B cell (primary cell): ENCODE measurements at regions of chr15 and their contacts with region 1.

Region 1: DNA sequence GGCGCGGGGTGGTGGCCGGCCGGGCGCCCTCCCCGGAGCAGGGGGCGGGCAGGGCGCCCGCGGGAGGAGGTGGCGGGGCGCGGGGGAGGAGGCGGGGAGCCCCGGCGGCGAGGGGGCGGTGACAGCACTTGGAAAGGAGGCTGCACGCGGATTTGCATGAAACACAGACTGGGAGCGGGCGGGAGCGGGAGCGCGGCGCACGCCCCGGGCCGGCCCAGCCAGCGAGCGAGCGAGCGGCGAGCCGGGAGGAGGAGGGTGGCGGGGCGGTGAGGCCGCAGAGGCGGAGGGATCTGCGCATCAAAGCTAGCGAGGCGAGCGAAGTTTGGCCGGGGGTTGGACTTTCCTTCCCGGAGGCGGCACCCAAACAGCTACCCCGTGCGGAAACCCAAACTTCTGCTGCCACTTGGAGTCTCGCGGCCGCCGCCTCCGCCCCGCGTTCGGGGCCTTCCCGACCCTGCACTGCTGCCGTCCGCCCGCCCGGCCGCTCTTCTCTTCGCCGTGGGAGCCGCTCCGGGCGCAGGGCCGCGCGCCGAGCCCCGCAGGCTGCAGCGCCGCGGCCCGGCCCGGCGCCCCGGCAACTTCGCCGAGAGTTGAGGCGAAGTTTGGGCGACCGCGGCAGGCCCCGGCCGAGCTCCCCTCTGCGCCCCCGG is at the start of gene SMAD3:
- DNase-seq: peak; percentile 93
- ATAC-seq: peak; percentile 74
- H3K4me3 ChIP-seq: peak within 1 kb of the TSS; percentile 42 to 99 (median 98)
- H3K4me3 Mint-ChIP-seq: peak within 1 kb of the TSS; percentile 96
- H3K27ac ChIP-seq: peak within 1 kb of the TSS; percentile 58 to 79
- H3K27ac Mint-ChIP-seq: peak within 1 kb of the TSS; percentile 92
- H3K4me1 ChIP-seq: peaks cover 33 to 51% of the 10 kb centered on the region in 2 donors
- H3K4me1 Mint-ChIP-seq: peaks cover 47% of the 10 kb centered on the region
- H3K27me3 ChIP-seq: no peaks in the 10 kb centered on the region
- H3K27me3 Mint-ChIP-seq: no peaks in the 10 kb centered on the region
- CTCF ChIP-seq: no peak
- total RNA-seq, gene SMAD3: 163 and 177 TPM in 2 replicates

Region 2: DNA sequence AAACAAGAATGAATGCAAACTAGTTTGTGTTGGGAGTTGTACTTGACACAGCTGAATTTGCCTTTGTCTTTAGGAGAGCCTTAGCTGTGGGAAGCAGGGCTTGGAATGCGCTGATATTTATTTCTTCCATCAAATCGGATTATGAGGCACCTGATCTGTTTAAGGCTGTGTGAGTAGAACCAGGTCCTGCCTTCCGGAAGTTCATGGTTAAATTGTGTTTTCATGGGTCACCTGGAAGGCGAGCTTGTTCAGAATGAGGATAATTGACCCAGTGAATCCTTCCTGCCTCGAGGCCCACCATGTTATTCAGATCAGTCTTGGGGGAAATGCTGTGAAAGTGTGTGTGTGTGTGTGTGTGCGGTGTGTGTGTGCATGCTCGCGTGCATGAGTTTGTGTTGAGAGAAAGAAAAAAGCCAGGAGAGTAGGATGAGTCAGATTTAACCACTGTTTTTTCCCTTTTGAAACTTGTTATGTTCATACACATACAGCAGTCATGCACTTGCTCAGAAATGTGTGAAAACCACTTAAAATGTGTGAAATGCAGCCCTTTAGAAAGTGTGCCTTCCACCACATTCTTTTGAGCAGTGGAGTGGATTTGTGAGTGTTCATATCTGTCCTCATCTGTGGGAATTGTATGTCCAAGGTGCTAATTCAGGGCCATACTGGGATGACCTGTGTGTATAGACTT is 36.5 kb after region 1 on chr15:
- CTCF ChIA-PET with region 1: interaction called, 12 read pairs
- POLR2A ChIA-PET with region 1: interaction called, 7 read pairs
- intact Hi-C with region 1: loop called (anchors 1 kb)
- DNase-seq: peak; percentile 50
- ATAC-seq: peak; percentile 47
- H3K4me3 ChIP-seq: peak overlapping the region in 2 of 5 experiments; percentile 21 to 55
- H3K4me3 Mint-ChIP-seq: no peak overlapping the region
- H3K27ac ChIP-seq: peak overlapping the region; percentile 97 to 98
- H3K27ac Mint-ChIP-seq: no peak overlapping the region
- H3K4me1 ChIP-seq: peaks cover 98 to 100% of the 10 kb centered on the region in 2 donors
- H3K4me1 Mint-ChIP-seq: peaks cover 29% of the 10 kb centered on the region
- H3K27me3 ChIP-seq: no peaks in the 10 kb centered on the region
- H3K27me3 Mint-ChIP-seq: no peaks in the 10 kb centered on the region
- CTCF ChIP-seq: no peak

Region 3: DNA sequence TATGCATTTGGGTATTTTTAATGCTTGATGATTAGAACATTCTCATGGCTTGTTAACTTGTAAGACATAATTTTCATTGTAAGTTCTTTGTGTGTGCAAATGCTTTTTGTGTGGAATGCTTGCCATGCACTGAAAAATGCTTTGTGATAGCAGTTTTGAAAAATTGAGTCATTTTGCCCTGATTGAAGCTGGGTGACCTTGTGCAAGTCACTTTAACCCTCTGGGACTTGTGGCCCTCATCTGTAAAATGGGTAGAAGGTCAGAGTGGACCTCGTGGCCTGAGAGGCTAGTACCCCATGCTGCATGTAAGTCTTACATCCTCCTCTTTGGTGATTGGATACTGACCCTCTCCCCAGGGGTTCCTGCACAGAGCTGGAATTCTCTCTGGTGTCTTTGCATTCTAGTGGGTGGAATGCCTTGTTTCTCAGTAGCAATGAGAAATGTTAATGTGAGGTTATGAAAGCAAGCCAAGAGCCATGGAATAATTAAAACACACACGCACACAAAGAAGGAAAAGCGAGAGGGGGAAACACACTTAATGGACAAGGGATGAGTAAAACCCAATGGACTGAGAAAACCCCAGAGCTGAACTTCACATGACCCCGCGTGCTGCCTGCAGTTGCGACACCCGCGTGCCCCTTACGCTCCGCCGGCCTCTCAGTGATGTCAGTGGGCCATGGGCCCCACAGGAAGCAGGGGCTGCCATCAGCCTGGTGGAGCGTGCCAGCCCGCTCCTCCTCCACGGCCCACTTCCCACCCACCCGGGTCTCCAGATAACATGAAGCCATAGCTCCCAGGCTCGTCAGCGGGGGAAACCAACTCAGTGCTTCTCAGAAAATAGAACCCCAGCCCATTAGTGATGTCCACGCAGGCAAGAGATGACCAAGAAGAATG is 43.8 kb after region 1 on chr15:
- CTCF ChIA-PET with region 1: interaction called, 3 read pairs
- POLR2A ChIA-PET with region 1: interaction called, 10 read pairs
- intact Hi-C with region 1: no loop called
- DNase-seq: peak; percentile 91
- ATAC-seq: peak; percentile 81
- H3K4me3 ChIP-seq: peak overlapping the region in 2 of 5 experiments; percentile 4 to 47
- H3K4me3 Mint-ChIP-seq: peak overlapping the region; percentile 76
- H3K27ac ChIP-seq: peak overlapping the region; percentile 88 to 98
- H3K27ac Mint-ChIP-seq: peak overlapping the region; percentile 94
- H3K4me1 ChIP-seq: peaks cover 81 to 84% of the 10 kb centered on the region in 2 donors
- H3K4me1 Mint-ChIP-seq: peaks cover 17% of the 10 kb centered on the region
- H3K27me3 ChIP-seq: no peaks in the 10 kb centered on the region
- H3K27me3 Mint-ChIP-seq: no peaks in the 10 kb centered on the region
- CTCF ChIP-seq: no peak

Region 4: DNA sequence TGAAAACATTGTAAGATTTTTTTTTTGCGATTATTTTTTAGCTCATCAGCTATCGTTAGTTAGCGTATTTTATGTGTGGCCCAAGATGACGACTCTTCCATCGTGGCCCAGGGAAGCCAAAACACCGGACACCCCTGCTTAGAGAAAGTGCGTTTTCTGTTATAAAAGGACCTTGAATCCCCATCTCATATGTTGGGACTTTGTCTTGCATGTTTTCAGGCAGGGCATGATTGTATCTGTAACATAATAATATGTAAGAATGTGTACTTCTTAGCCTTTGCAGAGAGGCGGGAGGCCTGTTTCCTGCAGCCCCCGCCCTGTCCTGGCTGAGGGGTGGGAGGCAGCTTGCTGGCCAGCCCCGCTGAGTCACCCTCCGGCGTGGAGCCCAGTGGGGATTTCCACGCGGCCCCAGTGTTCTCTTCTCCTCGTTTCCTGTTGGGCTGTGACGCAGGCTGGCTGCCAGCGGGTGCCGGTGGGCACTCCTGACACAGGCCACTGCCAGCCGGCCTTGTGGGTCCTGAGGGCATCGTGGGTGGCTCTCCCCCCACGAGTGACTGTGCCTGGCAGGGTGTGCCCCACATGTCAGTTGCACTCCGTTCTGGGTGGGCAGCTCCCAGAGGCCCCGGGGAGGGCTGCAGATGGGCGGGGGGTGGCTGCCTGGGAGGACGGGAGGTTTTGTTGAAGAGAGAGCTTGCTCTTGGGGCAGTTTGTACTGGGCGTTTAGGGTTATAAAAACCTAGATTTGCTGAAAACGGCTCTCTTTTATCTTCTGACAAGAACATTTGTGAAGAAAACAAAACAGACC is 55.5 kb after region 1 on chr15:
- CTCF ChIA-PET with region 1: interaction called, 11 read pairs
- POLR2A ChIA-PET with region 1: interaction called, 4 read pairs
- intact Hi-C with region 1: loop called (anchors 2 kb)
- DNase-seq: peak; percentile 94
- ATAC-seq: peak; percentile 89
- H3K4me3 ChIP-seq: peak overlapping the region; percentile 9 to 54 (median 24)
- H3K4me3 Mint-ChIP-seq: peak overlapping the region; percentile 82
- H3K27ac ChIP-seq: peak overlapping the region; percentile 90 to 91
- H3K27ac Mint-ChIP-seq: peak overlapping the region; percentile 96
- H3K4me1 ChIP-seq: peaks cover 83 to 93% of the 10 kb centered on the region in 2 donors
- H3K4me1 Mint-ChIP-seq: peaks cover 91% of the 10 kb centered on the region
- H3K27me3 ChIP-seq: no peaks in the 10 kb centered on the region
- H3K27me3 Mint-ChIP-seq: no peaks in the 10 kb centered on the region
- CTCF ChIP-seq: no peak

Region 5: GRCh38 chr15:67254238-67255175 is 188.9 kb after region 1 on chr15 and contains the starts of genes AAGAB and IQCH:
- CTCF ChIA-PET with region 1: no interaction called
- POLR2A ChIA-PET with region 1: interaction called, 3 read pairs
- intact Hi-C with region 1: loop called (anchors 1 kb)
- DNase-seq: peak; percentile 97
- ATAC-seq: peak; percentile 97
- H3K4me3 ChIP-seq: peak within 1 kb of the TSS; percentile 81 to 97 (median 92)
- H3K4me3 Mint-ChIP-seq: peak within 1 kb of the TSS; percentile 97
- H3K27ac ChIP-seq: peak within 1 kb of the TSS; percentile 72 to 84
- H3K27ac Mint-ChIP-seq: peak within 1 kb of the TSS; percentile 94
- H3K4me1 ChIP-seq: peaks cover 18 to 19% of the 10 kb centered on the region in 2 donors
- H3K4me1 Mint-ChIP-seq: peaks cover 30% of the 10 kb centered on the region
- H3K27me3 ChIP-seq: peaks cover 0 to 4% (median 0%) of the 10 kb centered on the region in 4 experiments
- H3K27me3 Mint-ChIP-seq: no peaks in the 10 kb centered on the region
- CTCF ChIP-seq: no peak
- total RNA-seq, gene AAGAB: 25.0 and 28.3 TPM in 2 replicates
- total RNA-seq, gene IQCH: 1.6 and 2.2 TPM in 2 replicates

Region 6: DNA sequence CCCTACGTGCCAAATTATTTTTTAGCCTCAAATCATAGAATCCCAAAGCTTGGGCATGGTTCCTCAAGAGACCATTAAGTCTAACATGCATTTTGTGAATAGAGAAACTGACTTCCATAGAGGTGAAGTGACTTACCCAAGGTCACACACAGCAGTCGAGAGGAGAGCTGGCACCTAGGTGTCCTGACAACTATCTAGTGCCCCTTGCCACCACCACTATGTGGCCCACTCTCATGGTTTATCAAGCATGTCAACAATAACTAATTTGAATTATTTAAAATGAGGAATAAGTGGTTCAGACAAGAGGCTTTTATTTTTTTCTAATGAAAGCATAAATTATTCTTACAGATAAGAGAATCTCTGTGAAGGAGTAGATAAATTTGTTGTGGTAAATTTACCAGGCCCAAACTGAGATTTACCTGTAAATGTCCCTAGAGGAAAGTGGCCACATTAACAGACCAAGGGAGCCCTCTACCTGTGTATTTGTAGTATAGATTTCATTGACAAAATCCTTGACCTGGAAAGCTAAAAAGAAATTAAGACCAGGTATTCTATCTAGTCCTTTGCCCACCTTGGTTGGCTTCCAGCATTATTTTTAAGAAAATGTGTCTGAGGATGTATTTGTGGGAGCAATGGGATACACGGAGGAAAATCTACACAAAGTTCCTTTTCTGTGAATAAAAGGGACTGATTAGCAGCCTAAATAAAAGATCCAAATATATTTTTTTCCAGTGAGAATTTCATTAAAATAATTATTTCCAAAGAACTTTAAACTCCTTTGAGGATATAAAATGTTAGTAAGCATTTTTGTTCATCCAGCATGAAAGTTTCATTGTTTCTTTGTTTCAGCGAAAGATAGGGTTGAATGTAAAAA is 238.2 kb after region 1 on chr15:
- CTCF ChIA-PET with region 1: interaction called, 3 read pairs
- POLR2A ChIA-PET with region 1: no interaction called
- intact Hi-C with region 1: loop called (anchors 5 kb)
- DNase-seq: peak; percentile 66
- ATAC-seq: no peak
- H3K4me3 ChIP-seq: no peak overlapping the region
- H3K4me3 Mint-ChIP-seq: no peak overlapping the region
- H3K27ac ChIP-seq: no peak overlapping the region
- H3K27ac Mint-ChIP-seq: no peak overlapping the region
- H3K4me1 ChIP-seq: no peaks in the 10 kb centered on the region
- H3K4me1 Mint-ChIP-seq: peaks cover 3% of the 10 kb centered on the region
- H3K27me3 ChIP-seq: no peaks in the 10 kb centered on the region
- H3K27me3 Mint-ChIP-seq: no peaks in the 10 kb centered on the region
- CTCF ChIP-seq: peak; percentile 69